MCF 10A (cell line): ENCODE measurements at regions of chr10 and their contacts with region 1.

Region 1: DNA sequence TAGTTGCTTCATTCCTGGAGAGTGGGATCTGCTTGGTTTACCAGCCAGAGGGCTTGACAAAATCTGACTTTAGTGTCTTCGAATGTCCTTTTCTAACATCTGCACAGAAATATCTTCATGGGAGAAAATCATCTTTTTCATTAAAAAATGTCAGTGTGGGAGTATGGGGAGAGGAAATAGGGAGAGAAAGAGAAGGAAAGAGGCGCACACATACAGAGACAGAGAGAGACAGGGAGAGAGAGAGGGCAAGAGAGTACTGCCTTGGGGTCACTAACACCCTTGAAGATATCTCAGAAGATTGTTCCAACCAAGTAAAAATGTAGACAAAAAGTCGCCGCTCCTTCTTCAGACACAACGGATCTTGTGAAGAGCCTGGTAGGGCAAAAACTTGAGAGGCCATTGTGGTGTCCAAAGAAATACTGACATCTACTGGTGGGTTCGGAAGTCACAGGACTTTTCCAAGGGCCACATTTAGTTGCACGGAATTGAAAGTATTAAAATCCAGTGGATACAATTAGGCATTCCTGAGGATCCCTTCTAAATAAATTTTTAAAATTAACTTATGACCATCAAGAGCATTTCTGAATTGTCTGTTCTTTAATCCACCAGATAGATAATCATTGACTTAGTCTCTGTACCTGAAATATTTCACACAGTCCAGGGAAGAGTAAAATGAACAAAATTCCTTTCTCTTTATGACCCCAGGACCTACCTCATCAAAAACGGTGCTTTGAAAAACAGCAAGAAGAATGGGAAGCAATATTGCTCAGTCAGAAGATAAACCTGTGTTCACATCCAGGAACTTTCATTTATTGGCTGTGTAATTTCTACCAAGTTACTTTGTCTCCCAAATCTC is 29.7 kb downstream of the VIM start:
- DNase-seq: peak; percentile 78
- H3K4me3 Mint-ChIP-seq: peak overlapping the region; percentile 56
- H3K27ac Mint-ChIP-seq: no peak overlapping the region
- H3K4me1 Mint-ChIP-seq: peaks cover 6% of the 10 kb centered on the region
- H3K27me3 Mint-ChIP-seq: no peaks in the 10 kb centered on the region
- CTCF ChIP-seq: peak; percentile 68

Region 2: DNA sequence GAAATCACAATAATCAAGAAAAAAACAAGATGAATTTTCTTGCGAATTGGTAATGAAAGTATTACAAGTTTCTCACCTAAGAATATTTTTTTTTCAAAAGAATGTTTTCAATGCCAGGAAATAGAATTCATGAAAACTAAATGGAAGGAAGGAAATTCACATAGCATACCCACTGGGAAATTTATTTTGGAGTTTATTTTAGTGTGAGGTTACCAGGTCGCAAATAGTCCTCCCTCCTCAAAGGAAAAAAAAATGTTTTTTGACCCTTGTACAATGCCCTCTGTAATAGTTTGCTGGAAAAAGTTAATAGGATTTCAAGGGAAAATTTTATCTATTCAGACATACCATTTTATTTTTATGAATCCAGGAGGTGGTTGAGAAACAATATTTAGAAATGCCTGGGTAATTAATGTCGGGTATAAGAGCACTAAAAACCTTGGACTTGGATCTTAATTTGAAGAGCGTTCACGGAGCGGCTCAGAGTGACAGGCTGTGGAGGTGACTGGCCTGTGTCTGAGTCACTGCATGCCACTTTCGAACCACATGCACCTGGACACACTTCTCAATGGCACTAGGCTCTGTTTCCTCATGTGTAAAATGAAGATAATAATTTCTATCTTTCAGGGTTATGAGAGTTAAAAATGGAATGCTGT is 156.3 kb before region 1 on chr10:
- CTCF ChIA-PET with region 1: no interaction called
- POLR2A ChIA-PET with region 1: no interaction called
- intact Hi-C with region 1: no loop called
- DNase-seq: no peak
- H3K4me3 Mint-ChIP-seq: no peak overlapping the region
- H3K27ac Mint-ChIP-seq: no peak overlapping the region
- H3K4me1 Mint-ChIP-seq: peaks cover 6% of the 10 kb centered on the region
- H3K27me3 Mint-ChIP-seq: no peaks in the 10 kb centered on the region
- CTCF ChIP-seq: no peak

Region 3: DNA sequence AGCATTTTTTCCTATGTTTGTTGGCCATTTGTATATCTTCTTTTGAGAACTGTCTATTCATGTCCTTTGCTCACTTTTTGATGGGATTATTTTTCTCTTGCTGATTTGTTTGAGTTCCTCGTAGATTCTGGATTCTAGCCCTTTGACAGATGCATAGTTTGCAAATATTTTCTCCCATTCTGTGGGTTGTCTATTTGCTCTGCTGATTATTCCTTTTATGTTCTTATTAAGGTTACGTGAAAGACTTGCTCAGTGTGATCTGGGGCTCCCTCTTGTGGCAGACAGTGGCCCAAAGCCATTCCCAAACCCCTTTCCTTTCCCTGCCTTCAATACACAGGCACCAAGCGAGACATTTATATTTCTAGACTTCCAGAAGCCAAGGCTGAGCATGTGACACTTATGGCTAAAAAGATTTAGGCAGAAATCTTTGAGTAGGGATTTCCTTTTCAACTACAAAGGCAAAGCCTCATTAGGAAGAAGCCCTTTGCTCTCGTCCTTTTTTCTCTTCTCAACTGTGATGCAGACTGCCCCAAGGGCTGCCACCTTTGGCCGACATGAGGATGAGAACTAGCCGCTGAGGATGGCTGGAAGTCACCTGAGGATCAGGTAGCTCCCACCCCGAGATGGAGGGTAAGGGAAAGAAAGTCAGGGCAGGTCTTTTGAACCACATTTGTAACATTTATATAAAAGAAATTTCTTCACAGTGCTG is 173.1 kb after region 1 on chr10:
- CTCF ChIA-PET with region 1: interaction called, 6 read pairs
- POLR2A ChIA-PET with region 1: interaction called, 3 read pairs
- intact Hi-C with region 1: loop called (anchors 1 kb)
- DNase-seq: peak; percentile 78
- H3K4me3 Mint-ChIP-seq: no peak overlapping the region
- H3K27ac Mint-ChIP-seq: no peak overlapping the region
- H3K4me1 Mint-ChIP-seq: peaks cover 5% of the 10 kb centered on the region
- H3K27me3 Mint-ChIP-seq: no peaks in the 10 kb centered on the region
- CTCF ChIP-seq: peak; percentile 81

Region 4: DNA sequence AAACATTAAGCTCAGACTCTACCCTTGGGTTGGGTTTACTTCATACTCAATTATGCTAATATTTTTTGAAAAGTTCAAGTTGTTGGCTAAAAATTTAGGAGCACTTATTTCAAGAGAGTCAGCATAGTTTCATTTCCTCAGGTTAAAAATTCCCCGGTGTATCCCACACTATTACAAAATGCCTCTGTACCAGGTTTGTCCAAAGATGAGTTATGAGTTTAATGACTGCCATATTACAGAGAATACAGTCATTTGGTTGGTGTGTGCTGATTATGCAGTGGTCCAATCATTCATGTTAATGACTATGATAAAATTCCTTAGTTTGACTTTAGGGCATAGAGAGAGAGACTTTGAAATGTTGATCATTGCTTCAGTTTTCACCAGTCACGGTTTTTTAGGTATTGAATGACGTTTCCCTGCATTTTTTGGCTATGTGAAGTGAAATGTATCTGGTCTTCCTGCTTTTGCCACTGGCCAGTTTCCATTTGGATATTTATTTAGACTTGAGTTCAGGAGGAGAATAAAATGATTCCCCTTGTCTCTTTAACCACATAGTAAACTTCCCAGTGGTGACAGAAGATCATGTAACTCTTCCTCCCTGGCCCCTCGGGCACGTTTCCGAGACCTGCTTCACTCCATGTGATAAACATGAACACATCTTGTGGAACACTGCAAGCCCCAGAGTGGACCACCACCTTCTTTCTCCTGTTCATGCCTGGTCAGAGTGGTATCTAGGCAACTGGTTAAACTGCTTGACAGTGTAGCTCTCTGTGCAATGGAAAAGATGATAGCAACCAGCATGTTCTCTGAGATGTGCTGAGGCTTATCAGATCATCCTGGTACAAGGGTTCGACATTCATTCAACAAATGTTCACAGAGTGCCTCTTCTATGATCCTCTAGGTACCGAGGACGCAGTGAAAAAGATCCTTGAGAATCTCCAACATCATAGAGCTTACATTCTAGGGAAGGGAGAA is 1036.1 kb after region 1 on chr10:
- CTCF ChIA-PET with region 1: no interaction called
- POLR2A ChIA-PET with region 1: no interaction called
- intact Hi-C with region 1: no loop called
- DNase-seq: no peak
- H3K4me3 Mint-ChIP-seq: no peak overlapping the region
- H3K27ac Mint-ChIP-seq: no peak overlapping the region
- H3K4me1 Mint-ChIP-seq: no peaks in the 10 kb centered on the region
- H3K27me3 Mint-ChIP-seq: no peaks in the 10 kb centered on the region
- CTCF ChIP-seq: no peak